ENCODE measurements at regions of chr18 and their contacts with region 1.

Region 1: DNA sequence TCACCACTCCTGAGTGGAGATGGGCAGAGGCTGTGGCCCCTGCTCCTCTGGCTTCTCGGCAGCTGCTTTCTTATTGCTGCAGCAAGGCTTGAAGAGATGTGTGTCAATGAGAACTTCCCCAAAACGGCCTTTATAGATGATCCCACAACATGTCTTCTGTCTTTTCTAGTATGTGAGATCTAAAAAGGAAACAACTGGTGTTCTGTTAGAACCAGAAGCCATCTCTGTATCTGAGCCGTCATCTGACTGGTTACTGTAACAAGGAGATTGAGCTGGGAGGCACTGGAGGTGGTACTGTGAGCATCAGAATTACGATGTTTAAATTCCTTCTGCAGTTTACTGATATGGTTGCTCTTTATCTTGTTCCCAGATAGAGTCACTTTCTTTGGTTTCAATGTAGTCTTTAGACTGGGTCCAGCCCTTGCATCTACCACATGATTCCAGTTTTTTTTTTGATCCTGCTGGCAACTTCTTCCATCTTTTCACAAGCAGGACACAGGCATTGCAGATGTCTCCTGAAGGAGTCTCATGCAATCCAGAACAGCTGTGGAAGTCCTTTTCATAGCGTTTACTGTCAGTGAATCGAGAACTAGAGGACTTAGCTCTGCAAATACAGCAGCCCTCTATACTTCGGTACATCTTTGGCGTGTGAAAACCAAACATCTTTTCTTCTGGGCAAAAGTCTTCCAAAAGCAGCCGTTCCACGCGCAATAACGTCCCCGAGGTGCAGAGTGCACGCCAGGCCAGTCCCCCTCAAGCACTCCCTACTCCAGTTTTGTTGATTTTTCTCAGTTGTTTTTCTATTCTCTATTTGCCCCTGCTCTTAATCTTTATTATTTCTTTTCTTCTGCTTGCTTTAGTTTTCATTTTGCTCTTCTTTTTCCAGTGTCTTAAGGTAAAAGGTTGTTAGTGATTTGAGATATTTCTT is 29.7 kb downstream of the TAF4B start:
- DNase-seq: peak; percentile 39
- ATAC-seq: peak; percentile 57
- H3K4me3 ChIP-seq: no peak overlapping the region
- H3K4me3 Mint-ChIP-seq: peak overlapping the region; percentile 68
- H3K27ac ChIP-seq: peak overlapping the region in 1 of 2 donors; percentile 36
- H3K27ac Mint-ChIP-seq: peak overlapping the region; percentile 68
- H3K4me1 ChIP-seq: peaks cover 10 to 15% of the 10 kb centered on the region in 2 donors
- H3K4me1 Mint-ChIP-seq: peaks cover 45% of the 10 kb centered on the region
- H3K27me3 ChIP-seq: no peaks in the 10 kb centered on the region
- H3K27me3 Mint-ChIP-seq: no peaks in the 10 kb centered on the region
- CTCF ChIP-seq: no peak

Region 2: GRCh38 chr18:26190506-26190905 is 65.5 kb before region 1 on chr18:
- CTCF ChIA-PET with region 1: no interaction called
- POLR2A ChIA-PET with region 1: no interaction called
- intact Hi-C with region 1: loop called (anchors 2 kb)
- DNase-seq: peak; percentile 79
- ATAC-seq: peak; percentile 93
- H3K4me3 ChIP-seq: peak overlapping the region in 4 of 5 experiments; percentile 11 to 59 (median 18)
- H3K4me3 Mint-ChIP-seq: peak overlapping the region; percentile 57
- H3K27ac ChIP-seq: peak overlapping the region; percentile 59 to 90
- H3K27ac Mint-ChIP-seq: peak overlapping the region; percentile 80
- H3K4me1 ChIP-seq: peaks cover 20 to 26% of the 10 kb centered on the region in 2 donors
- H3K4me1 Mint-ChIP-seq: peaks cover 32% of the 10 kb centered on the region
- H3K27me3 ChIP-seq: no peaks in the 10 kb centered on the region
- H3K27me3 Mint-ChIP-seq: no peaks in the 10 kb centered on the region
- CTCF ChIP-seq: no peak

Region 3: DNA sequence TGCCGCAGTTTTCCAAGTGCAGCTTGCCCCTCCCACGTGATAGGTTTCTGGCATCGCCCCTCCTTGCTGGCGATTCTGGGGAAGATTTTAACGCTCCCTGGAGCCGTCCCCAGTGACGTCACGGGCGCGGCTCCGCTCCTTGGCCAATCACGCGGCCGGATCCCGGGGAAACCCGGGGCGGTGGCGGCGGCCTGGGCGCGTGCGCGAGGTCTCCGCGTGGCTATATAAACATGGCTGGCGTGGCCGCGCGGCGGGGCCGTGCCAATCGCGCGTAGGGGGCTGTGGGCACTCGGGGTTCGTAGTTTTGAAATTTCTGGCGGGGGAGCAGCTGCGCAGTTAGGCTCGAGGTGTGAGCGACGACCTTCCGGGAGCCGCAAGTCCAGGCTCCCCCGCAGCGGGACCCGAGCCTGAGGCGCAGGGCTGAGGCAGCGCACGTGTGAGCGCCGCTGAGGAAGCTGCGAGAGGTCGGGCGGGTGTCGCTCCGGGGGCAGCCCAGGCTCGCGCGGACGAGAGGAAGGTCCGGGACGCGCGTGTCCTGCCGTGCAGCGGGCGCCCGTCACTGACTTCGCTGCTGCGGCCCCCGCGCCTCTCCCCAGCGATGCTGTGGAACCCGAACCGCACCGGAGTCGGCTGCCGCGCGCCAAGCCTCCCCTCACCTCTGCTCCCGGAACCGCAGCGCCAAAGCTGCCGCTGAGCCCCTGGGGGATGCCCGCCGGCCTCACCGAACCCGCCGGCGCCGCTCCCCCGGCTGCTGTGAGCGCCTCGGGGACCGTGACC is 29.5 kb before region 1 on chr18 and contains the start of gene TAF4B:
- CTCF ChIA-PET with region 1: no interaction called
- POLR2A ChIA-PET with region 1: no interaction called
- intact Hi-C with region 1: no loop called
- DNase-seq: peak; percentile 96
- ATAC-seq: peak; percentile 85
- H3K4me3 ChIP-seq: peak within 1 kb of the TSS; percentile 66 to 91 (median 82)
- H3K4me3 Mint-ChIP-seq: peak within 1 kb of the TSS; percentile 94
- H3K27ac ChIP-seq: peak within 1 kb of the TSS; percentile 88 to 95
- H3K27ac Mint-ChIP-seq: peak within 1 kb of the TSS; percentile 96
- H3K4me1 ChIP-seq: peaks cover 21 to 24% of the 10 kb centered on the region in 2 donors
- H3K4me1 Mint-ChIP-seq: peaks cover 38% of the 10 kb centered on the region
- H3K27me3 ChIP-seq: no peaks in the 10 kb centered on the region
- H3K27me3 Mint-ChIP-seq: no peaks in the 10 kb centered on the region
- CTCF ChIP-seq: no peak
- total RNA-seq, gene TAF4B: 15.6 and 16.1 TPM in 2 replicates

Region 4: DNA sequence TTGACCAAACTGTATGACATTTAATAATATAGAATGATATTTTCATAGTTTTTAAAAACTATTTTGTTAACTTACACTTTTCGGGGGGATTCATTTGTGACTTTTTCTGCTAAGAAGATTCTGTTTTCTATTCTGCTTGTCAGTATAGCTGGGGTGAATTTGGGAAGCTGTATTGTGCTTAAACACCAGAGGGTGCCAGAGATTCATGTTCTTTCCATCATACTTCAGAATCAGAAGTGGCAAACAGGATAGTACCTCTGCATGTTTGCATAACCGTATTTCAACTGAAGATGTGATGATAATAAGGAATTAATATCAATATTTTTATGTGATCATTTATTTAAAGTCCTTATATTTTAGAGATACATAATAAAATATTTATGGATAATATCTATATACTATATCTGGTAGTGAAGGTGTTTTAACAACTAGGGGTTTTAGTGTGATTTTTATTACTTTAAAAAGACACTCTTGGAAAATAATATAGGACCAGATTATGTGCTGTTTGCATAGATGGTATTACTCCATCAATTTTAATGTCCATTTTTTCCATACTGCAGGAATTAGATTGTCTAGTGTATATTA is 51.3 kb after region 1 on chr18:
- CTCF ChIA-PET with region 1: no interaction called
- POLR2A ChIA-PET with region 1: no interaction called
- intact Hi-C with region 1: no loop called
- DNase-seq: peak; percentile 35
- ATAC-seq: peak; percentile 45
- H3K4me3 ChIP-seq: no peak overlapping the region
- H3K4me3 Mint-ChIP-seq: no peak overlapping the region
- H3K27ac ChIP-seq: no peak overlapping the region
- H3K27ac Mint-ChIP-seq: no peak overlapping the region
- H3K4me1 ChIP-seq: no peaks in the 10 kb centered on the region
- H3K4me1 Mint-ChIP-seq: no peaks in the 10 kb centered on the region
- H3K27me3 ChIP-seq: no peaks in the 10 kb centered on the region
- H3K27me3 Mint-ChIP-seq: no peaks in the 10 kb centered on the region
- CTCF ChIP-seq: peak; percentile 68

Region 5: DNA sequence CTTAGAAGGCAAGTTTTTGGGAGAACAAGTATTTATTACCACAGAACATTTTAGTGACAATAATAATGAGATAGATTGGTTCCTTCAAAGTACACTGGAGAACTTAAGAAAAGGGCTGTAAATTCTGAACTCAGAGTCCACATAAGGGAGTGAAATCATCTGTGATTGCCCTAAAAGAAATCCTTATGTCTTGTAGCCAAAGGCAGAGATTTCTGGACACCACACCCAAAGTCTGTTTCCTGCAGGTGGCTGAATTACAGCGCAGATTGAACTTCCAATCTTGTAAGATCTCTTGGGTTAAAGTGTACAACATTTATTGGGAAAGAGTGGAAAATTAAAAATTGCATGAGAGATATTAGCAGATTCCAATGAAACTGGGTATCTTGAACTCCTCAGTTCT is 114.1 kb after region 1 on chr18:
- CTCF ChIA-PET with region 1: no interaction called
- POLR2A ChIA-PET with region 1: no interaction called
- intact Hi-C with region 1: no loop called
- DNase-seq: no peak
- ATAC-seq: no peak
- H3K4me3 ChIP-seq: no peak overlapping the region
- H3K4me3 Mint-ChIP-seq: no peak overlapping the region
- H3K27ac ChIP-seq: no peak overlapping the region
- H3K27ac Mint-ChIP-seq: no peak overlapping the region
- H3K4me1 ChIP-seq: no peaks in the 10 kb centered on the region
- H3K4me1 Mint-ChIP-seq: no peaks in the 10 kb centered on the region
- H3K27me3 ChIP-seq: no peaks in the 10 kb centered on the region
- H3K27me3 Mint-ChIP-seq: no peaks in the 10 kb centered on the region
- CTCF ChIP-seq: no peak

Region 6: DNA sequence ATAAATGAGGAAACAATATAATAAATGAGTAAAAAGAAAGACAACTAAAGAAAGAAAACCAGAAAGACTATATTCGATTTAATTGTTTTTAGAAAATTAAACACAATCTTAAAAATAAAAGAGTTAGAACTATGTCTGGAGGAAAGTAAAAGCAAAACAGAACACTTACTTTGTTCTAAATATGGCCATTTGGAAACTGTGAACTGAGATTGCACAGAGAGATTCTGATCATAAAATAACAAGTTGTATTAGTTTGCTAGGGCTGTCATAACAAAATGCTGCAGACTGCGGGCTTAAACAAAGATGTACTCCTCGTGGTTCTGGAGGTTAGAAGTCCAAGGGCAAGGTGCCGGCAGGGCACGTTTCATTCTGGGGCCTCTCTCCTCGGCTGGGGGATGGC is 737.6 kb after region 1 on chr18:
- CTCF ChIA-PET with region 1: no interaction called
- POLR2A ChIA-PET with region 1: no interaction called
- intact Hi-C with region 1: no loop called
- DNase-seq: no peak
- ATAC-seq: no peak
- H3K4me3 ChIP-seq: no peak overlapping the region
- H3K4me3 Mint-ChIP-seq: no peak overlapping the region
- H3K27ac ChIP-seq: no peak overlapping the region
- H3K27ac Mint-ChIP-seq: no peak overlapping the region
- H3K4me1 ChIP-seq: no peaks in the 10 kb centered on the region
- H3K4me1 Mint-ChIP-seq: peaks cover 2% of the 10 kb centered on the region
- H3K27me3 ChIP-seq: no peaks in the 10 kb centered on the region
- H3K27me3 Mint-ChIP-seq: no peaks in the 10 kb centered on the region
- CTCF ChIP-seq: no peak